HCT116 (cell line): ENCODE measurements at regions of chr11 and their contacts with region 1.

Region 1: DNA sequence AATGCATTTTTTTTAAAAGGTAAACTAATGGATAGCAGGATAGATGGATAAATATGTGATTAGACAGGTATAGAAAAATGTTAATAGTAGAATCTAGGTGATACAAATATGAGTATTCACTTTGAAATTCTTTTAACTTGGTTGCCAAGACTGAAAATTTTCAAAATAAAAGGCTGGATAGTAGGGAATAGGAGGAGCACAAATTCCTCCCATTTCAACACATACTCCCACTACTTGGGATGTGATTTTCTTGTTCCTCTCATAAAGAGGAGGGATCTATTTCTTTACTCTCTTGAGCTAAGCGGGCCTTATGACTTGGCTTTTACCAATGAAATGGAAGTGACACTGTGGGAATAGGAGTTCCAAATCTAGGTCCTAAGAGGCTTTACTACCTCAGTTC is 35.9 kb downstream of the PIK3C2A start:
- DNase-seq: no peak
- ATAC-seq: no peak
- H3K4me3 ChIP-seq: no peak overlapping the region
- H3K27ac ChIP-seq: no peak overlapping the region
- H3K4me1 ChIP-seq: no peaks in the 10 kb centered on the region
- H3K27me3 ChIP-seq: no peaks in the 10 kb centered on the region
- CTCF ChIP-seq: no peak
- POLR2A ChIP-seq: no peak
- RAD21 ChIP-seq: no peak

Region 2: DNA sequence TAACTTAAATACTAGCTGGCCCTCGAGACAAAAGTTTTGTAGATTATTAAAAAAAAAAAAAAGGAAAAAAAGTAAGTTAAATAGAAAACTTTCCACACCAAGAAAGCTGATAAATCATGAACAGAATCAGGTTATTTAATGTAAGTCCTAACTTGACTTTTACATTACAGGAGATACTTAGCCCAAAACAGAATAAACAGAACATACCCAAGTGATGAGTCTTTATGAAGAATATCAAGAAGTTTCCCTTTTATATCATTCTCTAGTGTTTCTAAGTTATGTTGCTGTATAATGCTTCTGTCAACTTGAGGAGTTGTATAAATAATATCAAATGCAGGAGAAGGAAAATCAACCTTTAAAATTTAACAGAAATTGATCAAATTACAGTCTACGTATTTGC is 49.9 kb before region 1 on chr11:
- CTCF ChIA-PET with region 1: no interaction called
- POLR2A ChIA-PET with region 1: no interaction called
- RAD21 ChIA-PET with region 1: no interaction called
- intact Hi-C with region 1: loop called (anchors 5 kb)
- DNase-seq: no peak
- ATAC-seq: no peak
- H3K4me3 ChIP-seq: no peak overlapping the region
- H3K27ac ChIP-seq: no peak overlapping the region
- H3K4me1 ChIP-seq: no peaks in the 10 kb centered on the region
- H3K27me3 ChIP-seq: no peaks in the 10 kb centered on the region
- CTCF ChIP-seq: no peak
- POLR2A ChIP-seq: no peak
- RAD21 ChIP-seq: no peak

Region 3: GRCh38 chr11:17298302-17298701 is 126.4 kb after region 1 on chr11:
- CTCF ChIA-PET with region 1: no interaction called
- POLR2A ChIA-PET with region 1: no interaction called
- RAD21 ChIA-PET with region 1: no interaction called
- intact Hi-C with region 1: no loop called
- DNase-seq: no peak
- ATAC-seq: no peak
- H3K4me3 ChIP-seq: no peak overlapping the region
- H3K27ac ChIP-seq: no peak overlapping the region
- H3K4me1 ChIP-seq: no peaks in the 10 kb centered on the region
- H3K27me3 ChIP-seq: no peaks in the 10 kb centered on the region
- CTCF ChIP-seq: no peak
- POLR2A ChIP-seq: no peak
- RAD21 ChIP-seq: no peak